Heart right ventricle (tissue), 16 donors: ENCODE measurements at regions of chr10 and their contacts with region 1.

Region 1: GRCh38 chr10:8577686-8578085 is 523.2 kb downstream of the GATA3 start:
- DNase-seq: no peak
- ATAC-seq: no peak
- H3K4me3 ChIP-seq: no peak overlapping the region
- H3K27ac ChIP-seq: no peak overlapping the region
- H3K4me1 ChIP-seq: no peaks in the 10 kb centered on the region
- H3K27me3 ChIP-seq: peaks cover 0 to 6% (median 0%) of the 10 kb centered on the region in 7 donors
- CTCF ChIP-seq: no peak

Region 2: DNA sequence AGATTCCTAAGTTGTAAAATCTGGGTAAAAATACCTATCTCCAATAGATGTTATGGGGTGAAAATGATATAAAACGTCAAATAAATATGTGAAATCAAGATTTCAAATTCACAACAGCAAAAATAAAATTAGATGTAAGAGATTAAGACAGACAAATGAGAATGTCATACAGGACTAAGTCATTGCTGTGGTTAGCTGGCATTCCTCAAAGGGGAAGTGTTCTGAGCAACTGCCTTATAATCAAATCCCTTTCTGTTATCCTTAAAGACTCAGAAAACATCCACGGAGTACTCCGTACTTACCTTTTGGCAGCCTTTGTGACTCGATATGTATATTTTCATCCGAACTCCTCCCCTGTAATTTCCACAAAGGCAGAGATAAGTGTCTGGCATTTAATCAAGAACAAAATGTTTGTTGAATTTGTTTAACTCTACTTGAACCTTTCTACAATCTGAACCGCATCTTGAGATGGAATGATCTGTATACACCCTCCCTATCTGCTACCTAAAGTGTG is 36.4 kb after region 1 on chr10:
- intact Hi-C with region 1: loop called in 1 of 10 experiments (anchors 2 kb)
- DNase-seq: no peak
- ATAC-seq: no peak
- H3K4me3 ChIP-seq: no peak overlapping the region
- H3K27ac ChIP-seq: no peak overlapping the region
- H3K4me1 ChIP-seq: no peaks in the 10 kb centered on the region
- H3K27me3 ChIP-seq: no peaks in the 10 kb centered on the region
- CTCF ChIP-seq: no peak

Region 3: DNA sequence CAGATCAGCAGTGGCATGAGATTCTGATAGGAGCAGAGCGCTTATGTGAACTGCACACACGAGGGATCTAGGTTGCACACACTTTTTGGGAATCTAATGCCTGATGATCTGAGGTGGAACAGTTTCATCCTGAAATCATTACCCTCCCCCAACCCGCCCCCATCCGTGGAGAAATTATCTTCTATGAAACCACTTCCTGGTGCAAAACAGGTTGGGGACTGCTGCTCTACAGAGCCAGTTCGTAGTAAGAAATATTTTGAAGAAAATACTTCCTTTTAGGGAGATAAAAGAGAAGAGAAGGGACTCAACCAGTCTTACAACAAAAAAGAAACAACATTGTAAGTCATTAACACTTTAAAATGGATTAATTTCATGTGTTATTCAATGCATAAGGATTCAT is 785.0 kb after region 1 on chr10:
- intact Hi-C with region 1: no loop called
- DNase-seq: no peak
- ATAC-seq: no peak
- H3K4me3 ChIP-seq: no peak overlapping the region
- H3K27ac ChIP-seq: no peak overlapping the region
- H3K4me1 ChIP-seq: no peaks in the 10 kb centered on the region
- H3K27me3 ChIP-seq: no peaks in the 10 kb centered on the region
- CTCF ChIP-seq: no peak